Activated CD4-positive, alpha-beta T cell treated with anti-CD3 and anti-CD28 coated beads, Interleukin-2, amount 10 ng/mL, durations not matched to agents 24 days and 14 days (primary cell): ENCODE measurements at regions of chr18 and their contacts with region 1.

Region 1: DNA sequence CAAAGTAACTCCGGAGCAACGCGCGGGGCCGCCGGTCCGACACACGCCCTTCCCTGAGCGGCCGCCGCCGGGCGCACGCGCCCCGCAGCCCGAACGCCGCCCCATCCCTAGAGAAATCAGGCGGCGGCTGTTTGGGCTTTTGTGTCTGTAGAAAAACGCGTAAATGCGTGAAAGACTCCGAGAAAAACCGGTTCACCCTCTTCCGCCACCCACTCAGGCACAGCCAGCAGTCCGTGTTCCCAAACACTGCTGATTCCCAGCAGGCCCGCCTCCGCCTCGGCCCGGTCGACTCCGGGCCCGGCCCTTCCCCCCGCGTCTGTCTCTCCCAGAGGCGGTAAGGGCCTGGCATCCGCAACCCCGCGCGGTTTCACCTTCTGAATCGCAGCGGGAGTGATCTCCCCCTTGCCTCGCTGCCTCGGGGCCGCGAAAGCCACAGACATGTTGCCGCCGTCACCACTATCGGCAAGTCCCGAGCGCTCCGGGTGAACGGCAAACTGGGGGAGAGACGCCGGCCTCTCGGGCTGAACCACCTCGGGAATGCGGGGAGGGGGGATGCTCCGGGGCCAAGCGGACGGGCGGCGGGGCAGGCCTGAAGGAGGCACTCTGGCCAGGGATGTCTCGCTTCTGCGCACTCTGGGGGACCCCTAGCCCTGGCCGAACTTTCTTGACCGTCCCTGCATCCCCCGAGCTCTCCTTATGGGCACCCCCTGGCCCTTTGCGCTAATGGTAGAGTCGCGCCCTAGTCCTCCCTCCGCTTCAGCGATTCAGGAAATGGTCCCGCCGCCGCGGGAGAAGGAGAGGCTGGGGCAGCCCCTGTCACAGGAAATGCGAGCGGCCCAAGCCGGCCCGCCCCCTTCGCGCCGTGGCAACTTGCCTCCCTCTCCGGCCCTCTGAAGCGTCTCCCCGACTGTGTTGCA is at the start of gene SS18:
- DNase-seq: peak; percentile 97
- H3K4me3 Mint-ChIP-seq: peak within 1 kb of the TSS; percentile 97
- H3K27ac Mint-ChIP-seq: peak within 1 kb of the TSS; percentile 97
- H3K4me1 Mint-ChIP-seq: peaks cover 19% of the 10 kb centered on the region
- H3K27me3 Mint-ChIP-seq: no peaks in the 10 kb centered on the region
- total RNA-seq, gene SS18: 66.2 and 70.8 TPM in 2 replicates

Region 2: GRCh38 chr18:25875551-25876240 is 214.7 kb before region 1 on chr18:
- intact Hi-C with region 1: no loop called
- DNase-seq: no peak
- H3K4me3 Mint-ChIP-seq: no peak overlapping the region
- H3K27ac Mint-ChIP-seq: no peak overlapping the region
- H3K4me1 Mint-ChIP-seq: no peaks in the 10 kb centered on the region
- H3K27me3 Mint-ChIP-seq: no peaks in the 10 kb centered on the region

Region 3: GRCh38 chr18:26022585-26022984 is 67.8 kb before region 1 on chr18:
- intact Hi-C with region 1: loop called (anchors 10 kb)
- DNase-seq: no peak
- H3K4me3 Mint-ChIP-seq: no peak overlapping the region
- H3K27ac Mint-ChIP-seq: no peak overlapping the region
- H3K4me1 Mint-ChIP-seq: peaks cover 17% of the 10 kb centered on the region
- H3K27me3 Mint-ChIP-seq: no peaks in the 10 kb centered on the region

Region 4: GRCh38 chr18:26057344-26057773 is 33.0 kb before region 1 on chr18:
- intact Hi-C with region 1: loop called (anchors 2 kb)
- DNase-seq: no peak
- H3K4me3 Mint-ChIP-seq: no peak overlapping the region
- H3K27ac Mint-ChIP-seq: peak overlapping the region; percentile 3
- H3K4me1 Mint-ChIP-seq: peaks cover 13% of the 10 kb centered on the region
- H3K27me3 Mint-ChIP-seq: no peaks in the 10 kb centered on the region